ENCODE measurements at regions of chr15 and their contacts with region 1.

Region 1: DNA sequence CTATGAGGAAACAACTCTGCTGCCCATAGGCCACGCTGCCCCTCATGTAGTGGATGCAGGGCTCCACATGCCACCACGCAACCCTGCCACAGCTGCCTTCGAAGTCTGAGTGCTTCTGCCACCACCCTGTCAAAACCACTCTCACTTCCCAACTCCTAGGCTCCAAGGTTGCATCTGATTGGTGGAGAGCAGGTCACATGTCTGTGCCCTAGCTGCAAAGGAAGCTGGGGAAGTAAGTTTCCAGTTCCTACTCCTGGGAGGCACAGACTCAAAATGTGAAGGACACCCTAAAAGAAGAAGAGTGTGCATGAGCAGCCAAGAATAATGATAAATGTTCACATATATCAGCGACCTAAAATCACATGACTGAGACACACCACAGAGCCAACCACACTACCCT is 31.9 kb upstream of the TICRR start:
- DNase-seq: no peak
- H3K4me3 ChIP-seq: no peak overlapping the region
- CTCF ChIP-seq: no peak

Region 2: DNA sequence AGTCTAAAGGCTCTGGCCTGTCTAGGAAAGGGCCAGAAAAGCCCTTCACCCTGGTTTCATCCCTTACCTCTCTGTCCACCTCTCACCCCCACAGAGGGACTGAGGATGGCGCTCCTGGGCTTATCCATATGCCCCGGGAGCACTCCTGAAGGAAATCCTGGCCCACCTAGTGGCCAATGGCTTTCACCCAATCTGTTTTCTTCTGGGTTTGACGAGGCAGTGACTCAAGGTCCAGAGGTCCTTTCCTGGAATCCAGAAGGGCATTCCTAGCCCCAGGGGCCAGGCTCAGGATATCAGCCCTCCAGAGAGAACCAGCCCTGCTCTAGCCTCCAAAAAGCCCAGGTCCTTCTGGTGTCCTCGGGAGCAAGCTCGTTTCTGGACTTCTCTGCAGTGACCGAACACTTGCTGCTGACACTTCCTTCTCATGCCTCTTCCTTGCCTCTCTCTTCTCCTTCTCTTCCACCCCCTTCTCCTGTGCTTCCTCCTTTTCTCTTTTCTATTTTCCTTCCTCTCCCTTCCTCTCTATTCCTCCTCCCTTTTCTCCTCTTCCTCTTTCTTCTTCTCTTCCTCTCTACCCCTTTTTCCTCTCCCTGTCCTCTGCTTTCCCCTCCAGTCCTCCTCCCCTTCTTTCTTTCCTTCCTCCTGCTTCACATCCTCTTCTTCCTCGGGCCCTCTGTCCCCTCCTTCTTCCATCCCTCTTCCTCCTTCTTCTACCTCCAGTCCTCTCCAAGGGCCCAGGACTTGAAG is 106.6 kb before region 1 on chr15:
- CTCF ChIA-PET with region 1: no interaction called
- POLR2A ChIA-PET with region 1: no interaction called
- DNase-seq: no peak
- H3K4me3 ChIP-seq: no peak overlapping the region
- CTCF ChIP-seq: no peak

Region 3: DNA sequence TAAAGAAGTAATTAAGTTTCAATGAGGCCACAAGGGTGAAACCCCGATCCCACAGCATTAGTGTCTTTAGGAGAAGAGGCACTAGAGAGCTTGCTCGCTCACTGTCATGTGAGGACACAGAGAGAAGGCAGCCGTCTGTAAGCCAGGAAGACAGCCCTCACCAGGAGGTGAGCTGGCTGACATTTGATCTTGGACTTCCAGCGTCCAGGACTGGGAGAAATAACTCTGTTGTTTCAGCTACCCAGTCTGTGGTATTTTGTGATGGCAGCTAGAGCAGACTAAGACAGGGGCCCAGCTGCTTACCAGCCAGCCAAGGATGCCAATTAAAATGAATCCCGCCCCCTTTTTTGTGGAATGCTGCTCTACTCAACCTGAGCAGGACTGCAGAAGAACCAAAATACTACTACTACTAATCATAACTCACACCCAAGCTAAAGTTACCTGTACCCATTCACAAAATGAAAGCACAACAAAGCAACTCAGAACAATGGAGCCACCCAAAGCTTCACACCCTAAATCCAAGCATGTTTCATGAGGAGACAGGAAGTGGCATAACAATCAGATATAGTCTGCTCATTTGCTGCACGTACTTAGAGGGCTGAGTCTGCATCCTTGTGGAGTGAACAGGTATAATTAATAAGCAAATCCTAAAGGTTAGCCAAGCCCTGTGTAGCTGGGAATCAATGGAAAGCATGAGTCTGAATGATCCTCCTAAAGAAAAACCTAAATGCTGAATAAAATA is 11.4 kb before region 1 on chr15:
- CTCF ChIA-PET with region 1: no interaction called
- POLR2A ChIA-PET with region 1: no interaction called
- DNase-seq: no peak
- H3K4me3 ChIP-seq: no peak overlapping the region
- CTCF ChIP-seq: no peak

Region 4: GRCh38 chr15:89556413-89557262 is 13.2 kb after region 1 on chr15:
- CTCF ChIA-PET with region 1: interaction called, 17 read pairs
- POLR2A ChIA-PET with region 1: no interaction called
- DNase-seq: peak; percentile 24
- H3K4me3 ChIP-seq: no peak overlapping the region
- CTCF ChIP-seq: peak; percentile 74

Measured in AG04449 (cell line).